Transverse colon (tissue), 4 donors: ENCODE measurements at regions of chr19 and their contacts with region 1.

Region 1: GRCh38 chr19:56099638-56100539 is 21.2 kb downstream of the ZNF787 start:
- DNase-seq: no peak
- H3K4me3 ChIP-seq: no peak overlapping the region
- H3K27ac ChIP-seq: no peak overlapping the region
- H3K4me1 ChIP-seq: peaks cover 3 to 5% (median 4%) of the 10 kb centered on the region in 4 donors
- H3K27me3 ChIP-seq: no peaks in the 10 kb centered on the region
- CTCF ChIP-seq: no peak
- EP300 ChIP-seq: no peak
- POLR2A ChIP-seq: no peak

Region 2: DNA sequence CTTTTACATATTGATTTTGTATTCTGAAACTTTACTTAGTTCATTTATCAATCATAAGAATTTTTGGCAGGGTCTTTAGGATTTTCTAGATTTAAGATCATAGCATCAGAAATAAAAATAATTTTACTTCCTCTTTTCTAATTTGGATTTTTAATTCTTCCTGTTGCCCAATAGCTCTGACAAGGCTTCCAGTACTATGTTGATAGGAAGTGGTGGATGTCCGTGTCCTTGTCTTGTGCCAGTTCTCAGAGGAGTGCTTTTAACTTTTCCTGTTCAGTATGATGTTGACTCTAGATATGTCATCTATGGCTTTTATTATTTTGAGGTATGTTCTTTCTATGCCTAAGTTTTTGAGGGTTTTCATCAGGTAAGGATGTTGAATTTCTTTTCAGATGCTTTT is 1304.1 kb before region 1 on chr19:
- in situ Hi-C with region 1: no loop called
- intact Hi-C with region 1: loop called (anchors 5 kb)
- DNase-seq: no peak
- H3K4me3 ChIP-seq: no peak overlapping the region
- H3K27ac ChIP-seq: no peak overlapping the region
- H3K4me1 ChIP-seq: no peaks in the 10 kb centered on the region
- H3K27me3 ChIP-seq: peaks cover 7% of the 10 kb centered on the region
- CTCF ChIP-seq: no peak
- EP300 ChIP-seq: no peak
- POLR2A ChIP-seq: no peak

Region 3: DNA sequence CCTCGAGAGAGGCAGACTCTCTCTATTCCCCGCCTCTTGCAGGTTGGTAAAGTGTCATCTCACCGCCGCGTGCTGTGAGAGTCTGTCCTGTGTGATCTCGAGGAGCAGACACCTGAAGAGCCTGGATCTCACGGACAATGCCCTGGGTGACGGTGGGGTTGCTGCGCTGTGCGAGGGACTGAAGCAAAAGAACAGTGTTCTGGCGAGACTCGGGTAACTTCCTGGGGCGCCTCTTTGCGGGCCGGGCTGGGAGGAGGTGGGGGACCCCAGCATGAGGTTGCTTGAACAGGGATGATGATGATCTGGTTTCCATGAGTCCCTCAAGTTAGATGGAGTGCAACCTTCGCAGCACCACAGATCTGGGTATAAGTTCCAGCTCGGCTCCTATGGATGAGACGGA is 46.3 kb before region 1 on chr19:
- in situ Hi-C with region 1: no loop called
- intact Hi-C with region 1: no loop called
- DNase-seq: no peak
- H3K4me3 ChIP-seq: no peak overlapping the region
- H3K27ac ChIP-seq: no peak overlapping the region
- H3K4me1 ChIP-seq: no peaks in the 10 kb centered on the region
- H3K27me3 ChIP-seq: no peaks in the 10 kb centered on the region
- CTCF ChIP-seq: no peak
- EP300 ChIP-seq: no peak
- POLR2A ChIP-seq: no peak

Region 4: DNA sequence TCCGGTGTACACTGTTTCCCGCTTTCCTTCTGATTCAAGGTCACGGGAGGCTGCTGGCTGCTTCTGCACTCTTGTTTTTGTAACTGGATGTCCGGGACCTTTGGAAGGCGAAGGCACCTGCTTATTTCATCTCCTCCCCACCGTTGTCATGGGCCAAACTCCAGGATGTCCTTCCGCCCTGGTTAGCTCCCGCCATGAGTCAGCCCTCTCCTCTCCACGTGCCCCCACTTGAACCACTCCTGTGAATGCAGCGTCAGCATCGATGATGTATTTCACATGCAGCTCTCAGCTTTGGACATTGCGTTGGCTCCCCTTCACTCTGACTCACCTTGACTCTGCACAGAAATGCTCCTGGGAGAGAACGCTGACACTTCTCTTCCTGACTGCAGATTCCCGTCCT is 70.4 kb after region 1 on chr19:
- in situ Hi-C with region 1: no loop called
- intact Hi-C with region 1: no loop called
- DNase-seq: no peak
- H3K4me3 ChIP-seq: no peak overlapping the region
- H3K27ac ChIP-seq: no peak overlapping the region
- H3K4me1 ChIP-seq: peaks cover 0 to 4% (median 2%) of the 10 kb centered on the region in 4 donors
- H3K27me3 ChIP-seq: peaks cover 21% of the 10 kb centered on the region
- CTCF ChIP-seq: no peak
- EP300 ChIP-seq: no peak
- POLR2A ChIP-seq: no peak